ENCODE measurements at regions of chr17 and their contacts with region 1.

Region 1: GRCh38 chr17:78745407-78746088 is 36.5 kb downstream of the CYTH1 start:
- DNase-seq: no peak
- CTCF ChIP-seq: peak; percentile 38

Region 2: GRCh38 chr17:78759203-78759968 is 13.8 kb after region 1 on chr17:
- CTCF ChIA-PET with region 1: interaction called, 9 read pairs
- POLR2A ChIA-PET with region 1: interaction called, 17 read pairs
- DNase-seq: no peak
- CTCF ChIP-seq: no peak

Region 3: DNA sequence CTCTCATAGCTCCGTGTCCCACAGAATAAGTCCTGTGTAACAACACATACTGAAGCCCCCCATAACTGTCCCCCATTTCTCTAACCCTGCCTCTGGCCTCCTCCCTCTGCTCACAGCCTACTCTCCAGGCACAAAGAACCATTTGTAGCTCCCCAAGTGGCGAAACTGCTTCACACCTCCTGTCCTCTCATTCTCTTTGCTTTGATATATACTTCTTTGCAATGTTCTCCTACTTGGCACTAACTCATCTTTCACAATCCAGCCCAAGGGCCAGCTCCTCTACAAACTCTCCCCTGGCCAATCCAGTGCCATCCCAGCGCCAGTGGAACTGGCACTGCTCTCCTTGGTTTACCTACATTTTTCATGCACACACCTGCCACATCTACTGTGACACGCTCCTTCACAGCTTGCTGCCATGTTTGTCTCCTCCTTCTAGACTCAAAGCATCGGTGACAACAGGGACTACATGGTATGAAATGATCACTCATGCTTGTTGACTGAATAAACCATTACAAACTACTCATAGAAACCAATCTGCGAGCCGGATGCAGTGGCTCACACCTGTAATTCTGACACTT is 23.7 kb after region 1 on chr17:
- CTCF ChIA-PET with region 1: interaction called, 22 read pairs
- POLR2A ChIA-PET with region 1: interaction called, 3 read pairs
- DNase-seq: no peak
- CTCF ChIP-seq: peak; percentile 43

Region 4: GRCh38 chr17:78865682-78866390 is 120.3 kb after region 1 on chr17:
- CTCF ChIA-PET with region 1: no interaction called
- POLR2A ChIA-PET with region 1: no interaction called
- DNase-seq: peak; percentile 79
- CTCF ChIP-seq: peak; percentile 95

Measured in GM10248 (cell line).